Left lung (tissue), 14 donors: ENCODE measurements at regions of chr19 and their contacts with region 1.

Region 1: DNA sequence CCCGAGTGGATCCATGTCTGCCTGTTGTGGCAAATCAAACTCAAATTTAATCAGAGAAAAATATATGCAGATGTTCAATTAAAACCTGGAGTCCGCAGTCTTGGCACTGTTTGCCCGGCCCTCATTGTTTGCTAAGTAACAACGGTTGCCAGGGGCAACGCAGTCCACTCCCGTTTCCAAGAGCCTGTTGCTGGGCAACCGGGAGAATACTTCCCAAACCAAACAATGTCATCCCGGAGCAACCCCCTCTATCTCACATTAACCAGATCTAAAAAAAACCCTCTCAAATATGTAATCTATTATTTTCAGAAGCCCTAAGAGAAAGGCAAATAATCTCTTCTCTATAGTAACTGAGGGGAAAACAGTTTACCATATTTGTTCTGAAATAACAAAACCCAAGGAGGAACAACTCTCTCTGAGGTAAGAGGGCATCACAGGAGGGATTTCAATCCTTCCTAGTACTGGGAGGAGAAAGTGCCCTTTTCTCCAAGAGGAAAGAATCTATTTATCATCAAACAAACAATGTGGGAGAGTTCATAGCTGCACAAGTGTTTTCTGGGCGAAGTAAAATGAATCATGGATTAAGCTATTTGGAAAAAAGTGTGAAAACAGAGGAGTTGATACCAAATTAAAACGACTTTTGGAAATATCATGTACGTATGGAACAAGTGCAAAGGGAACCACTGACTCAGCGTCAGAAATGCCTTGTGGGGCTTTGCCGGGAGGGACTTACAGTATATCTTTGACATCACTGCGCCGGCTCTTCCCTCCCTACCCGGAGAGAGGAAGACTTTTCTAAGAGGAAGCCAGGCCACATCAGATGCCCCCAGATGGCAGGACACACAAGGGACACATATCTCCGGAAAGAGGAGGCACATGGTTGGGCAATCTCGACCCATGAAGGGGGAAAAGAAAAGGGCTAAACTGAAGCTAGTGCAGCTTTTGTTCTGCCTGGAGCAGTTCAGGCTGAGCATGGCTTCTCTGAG is 43.3 kb downstream of the RFX2 start:
- DNase-seq: peak; percentile 87 to 98 (median 95)
- ATAC-seq: peak; percentile 68
- H3K4me3 ChIP-seq: no peak overlapping the region
- H3K27ac ChIP-seq: peak overlapping the region; percentile 90 to 99
- H3K4me1 ChIP-seq: peaks cover 39 to 74% of the 10 kb centered on the region in 2 donors
- H3K27me3 ChIP-seq: no peaks in the 10 kb centered on the region
- CTCF ChIP-seq: no peak

Region 2: GRCh38 chr19:6108721-6109633 is 42.0 kb after region 1 on chr19:
- intact Hi-C with region 1: loop called in 1 of 2 experiments (anchors 5 kb)
- DNase-seq: peak; percentile 72 to 87 (median 81)
- ATAC-seq: peak; percentile 38
- H3K4me3 ChIP-seq: peak overlapping the region; percentile 59 to 62
- H3K27ac ChIP-seq: peak overlapping the region; percentile 80 to 91
- H3K4me1 ChIP-seq: peaks cover 13 to 46% of the 10 kb centered on the region in 2 donors
- H3K27me3 ChIP-seq: no peaks in the 10 kb centered on the region
- CTCF ChIP-seq: no peak

Region 3: GRCh38 chr19:6187374-6187773 is 120.4 kb after region 1 on chr19:
- intact Hi-C with region 1: no loop called
- DNase-seq: no peak
- ATAC-seq: no peak
- H3K4me3 ChIP-seq: no peak overlapping the region
- H3K27ac ChIP-seq: no peak overlapping the region
- H3K4me1 ChIP-seq: no peaks in the 10 kb centered on the region
- H3K27me3 ChIP-seq: peaks cover 0 to 15% of the 10 kb centered on the region in 2 donors
- CTCF ChIP-seq: no peak